Psoas muscle (tissue), 8 donors: ENCODE measurements at regions of chr13 and their contacts with region 1.

Region 1: DNA sequence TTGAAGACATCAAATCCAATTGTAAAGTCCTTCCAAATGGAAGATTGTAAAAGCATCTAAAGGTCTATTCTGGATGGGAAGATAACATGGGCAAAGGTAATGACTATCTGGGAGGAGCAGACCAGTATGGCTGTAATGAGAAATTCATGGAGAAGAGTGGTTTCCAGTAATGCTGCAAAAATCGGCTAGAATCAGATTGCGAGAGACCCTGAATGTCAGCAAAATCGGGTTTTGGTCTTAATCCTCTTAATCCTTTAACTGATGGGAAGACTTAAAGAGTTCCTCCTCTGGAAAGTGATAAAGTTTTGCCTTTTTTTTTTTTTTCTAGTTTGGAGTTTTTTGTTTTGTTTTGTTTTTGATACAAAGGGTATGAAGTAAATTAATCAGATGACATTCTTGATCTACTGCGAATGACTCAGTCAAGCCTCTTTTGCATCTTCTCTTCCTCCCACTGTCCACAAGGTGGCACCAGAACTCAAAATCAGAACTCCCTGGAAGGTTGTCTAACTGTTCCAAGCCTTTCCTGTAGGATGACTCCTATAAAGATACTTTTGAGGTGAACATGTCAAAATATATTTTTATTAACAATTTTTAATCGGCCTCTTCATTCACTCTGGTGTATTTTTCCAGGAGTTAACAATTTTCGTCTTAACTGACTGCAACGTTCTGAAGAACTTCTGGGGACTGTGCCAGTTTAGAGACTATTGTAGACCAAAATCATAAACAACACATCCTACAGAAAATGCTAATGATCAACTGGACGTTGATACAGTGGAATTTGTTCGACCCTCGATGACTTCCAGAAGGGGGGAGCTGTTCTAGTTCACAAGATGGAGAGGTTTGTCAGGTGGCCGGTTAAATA is 213.3 kb upstream of the MIR17HG start:
- DNase-seq: no peak
- ATAC-seq: peak in 3 of 4 donors; percentile 68 to 80 (median 68)
- H3K4me3 ChIP-seq: no peak overlapping the region
- H3K27ac ChIP-seq: no peak overlapping the region
- H3K4me1 ChIP-seq: no peaks in the 10 kb centered on the region
- H3K27me3 ChIP-seq: no peaks in the 10 kb centered on the region
- CTCF ChIP-seq: peak; percentile 71

Region 2: DNA sequence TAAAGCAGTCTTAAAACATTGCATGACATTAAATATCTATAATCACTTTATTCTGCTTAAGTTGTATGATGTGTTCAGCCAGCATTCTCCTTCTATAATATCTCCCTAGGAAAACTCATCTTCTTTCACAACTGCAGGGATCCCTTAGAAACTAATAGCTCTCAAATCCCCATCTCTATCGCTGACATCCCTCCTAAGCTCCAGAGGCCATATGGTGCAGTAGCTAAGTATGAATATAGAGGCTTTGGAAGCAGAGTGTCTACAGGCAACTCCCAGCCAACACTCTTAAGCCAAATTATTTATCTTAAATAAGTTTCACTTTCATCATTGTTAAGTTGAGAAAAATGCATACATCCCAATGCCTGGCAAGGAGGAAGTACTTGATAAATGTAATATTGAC is 136.2 kb before region 1 on chr13:
- intact Hi-C with region 1: no loop called
- DNase-seq: no peak
- ATAC-seq: no peak
- H3K4me3 ChIP-seq: no peak overlapping the region
- H3K27ac ChIP-seq: no peak overlapping the region
- H3K4me1 ChIP-seq: no peaks in the 10 kb centered on the region
- H3K27me3 ChIP-seq: no peaks in the 10 kb centered on the region
- CTCF ChIP-seq: no peak

Region 3: GRCh38 chr13:91154558-91155353 is 20.6 kb after region 1 on chr13:
- intact Hi-C with region 1: no loop called
- DNase-seq: no peak
- ATAC-seq: no peak
- H3K4me3 ChIP-seq: no peak overlapping the region
- H3K27ac ChIP-seq: no peak overlapping the region
- H3K4me1 ChIP-seq: no peaks in the 10 kb centered on the region
- H3K27me3 ChIP-seq: no peaks in the 10 kb centered on the region
- CTCF ChIP-seq: no peak

Region 4: GRCh38 chr13:91174886-91175501 is 40.8 kb after region 1 on chr13:
- intact Hi-C with region 1: no loop called
- DNase-seq: no peak
- ATAC-seq: no peak
- H3K4me3 ChIP-seq: peak overlapping the region; percentile 5
- H3K27ac ChIP-seq: no peak overlapping the region
- H3K4me1 ChIP-seq: no peaks in the 10 kb centered on the region
- H3K27me3 ChIP-seq: peaks cover 0 to 3% (median 0%) of the 10 kb centered on the region in 3 donors
- CTCF ChIP-seq: no peak

Region 5: DNA sequence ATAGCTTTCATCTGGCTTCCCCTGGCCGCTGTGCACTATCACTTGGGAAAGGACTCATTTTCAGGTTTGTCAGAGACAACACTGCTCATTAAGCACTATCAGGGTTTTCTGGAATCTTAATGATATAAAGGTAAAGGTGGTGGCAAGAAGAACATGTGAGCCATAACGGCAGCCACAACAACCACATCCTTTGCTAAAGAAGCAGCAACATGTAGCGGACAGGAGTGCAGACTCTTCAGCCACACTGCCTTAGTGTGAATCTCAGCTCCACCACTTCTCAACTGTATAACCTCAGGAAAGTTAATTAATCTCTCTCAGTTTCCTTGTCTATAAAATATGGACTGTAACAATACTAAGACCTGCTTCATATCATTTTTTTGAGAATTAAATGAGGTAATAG is 189.2 kb after region 1 on chr13:
- intact Hi-C with region 1: loop called in 1 of 2 experiments (anchors 5 kb)
- DNase-seq: no peak
- ATAC-seq: no peak
- H3K4me3 ChIP-seq: no peak overlapping the region
- H3K27ac ChIP-seq: no peak overlapping the region
- H3K4me1 ChIP-seq: no peaks in the 10 kb centered on the region
- H3K27me3 ChIP-seq: peaks cover 0 to 3% (median 0%) of the 10 kb centered on the region in 3 donors
- CTCF ChIP-seq: no peak

Region 6: GRCh38 chr13:91510058-91510457 is 375.9 kb after region 1 on chr13:
- intact Hi-C with region 1: no loop called
- DNase-seq: no peak
- ATAC-seq: no peak
- H3K4me3 ChIP-seq: no peak overlapping the region
- H3K27ac ChIP-seq: no peak overlapping the region
- H3K4me1 ChIP-seq: no peaks in the 10 kb centered on the region
- H3K27me3 ChIP-seq: no peaks in the 10 kb centered on the region
- CTCF ChIP-seq: no peak